ENCODE measurements at regions of chr21 and their contacts with region 1.

Region 1: GRCh38 chr21:45130324-45130774 is 56.0 kb downstream of the ADARB1 start:
- DNase-seq: no peak
- ATAC-seq: peak; percentile 85
- H3K4me3 ChIP-seq: no peak overlapping the region
- H3K27ac ChIP-seq: no peak overlapping the region
- H3K4me1 ChIP-seq: peaks cover 3% of the 10 kb centered on the region
- H3K27me3 ChIP-seq: peaks cover 0 to 2% of the 10 kb centered on the region in 2 experiments; a peak in 2 of 4 replicates
- CTCF ChIP-seq: no peak
- EP300 ChIP-seq: no peak
- POLR2A ChIP-seq: no peak
- RAD21 ChIP-seq: no peak

Region 2: DNA sequence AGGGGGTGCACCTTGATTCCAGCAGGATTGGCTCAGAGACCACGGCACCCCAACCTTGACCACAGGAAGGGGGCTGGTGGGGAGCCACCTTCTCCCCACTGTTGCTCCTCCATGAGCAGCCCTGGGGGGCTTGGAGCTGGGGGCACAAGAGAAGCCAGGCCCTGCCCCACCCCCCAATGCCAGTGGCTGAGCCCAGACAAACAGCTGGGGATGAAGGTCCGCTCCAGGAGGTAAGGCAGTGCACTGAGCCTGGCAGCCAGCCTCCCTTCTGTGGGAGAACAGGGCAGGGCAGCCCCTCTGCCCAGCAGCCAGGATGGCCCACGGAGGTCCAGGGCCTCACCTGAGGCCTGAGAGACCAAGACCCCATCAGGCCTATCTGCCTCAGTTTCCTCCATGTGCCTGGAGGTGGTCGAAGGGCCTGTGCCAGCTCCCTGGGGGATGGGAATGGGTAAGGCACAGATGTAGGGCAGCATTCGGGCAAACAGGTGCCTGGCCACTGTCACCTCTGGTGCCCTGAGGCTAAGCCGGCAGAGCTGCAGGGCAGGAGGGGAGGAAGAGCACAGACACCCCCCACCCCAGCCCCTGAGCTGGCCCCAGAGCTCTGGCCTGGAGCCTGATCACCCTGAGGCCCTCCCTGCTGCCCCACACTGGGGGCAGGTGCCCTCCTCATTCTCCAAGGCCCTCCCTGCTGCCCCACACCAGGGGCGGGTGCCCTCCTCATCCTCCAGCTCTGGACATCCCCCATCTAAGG is 216.7 kb before region 1 on chr21:
- CTCF ChIA-PET with region 1: no interaction called
- POLR2A ChIA-PET with region 1: no interaction called
- RAD21 ChIA-PET with region 1: no interaction called
- SMC1A ChIA-PET with region 1: no interaction called
- in situ Hi-C with region 1: no loop called
- intact Hi-C with region 1: no loop called
- DNase-seq: no peak
- ATAC-seq: no peak
- H3K4me3 ChIP-seq: no peak overlapping the region
- H3K27ac ChIP-seq: peak overlapping the region; percentile 45
- H3K4me1 ChIP-seq: peaks cover 38% of the 10 kb centered on the region
- H3K27me3 ChIP-seq: no peaks in the 10 kb centered on the region
- CTCF ChIP-seq: no peak
- EP300 ChIP-seq: no peak
- POLR2A ChIP-seq: no peak
- RAD21 ChIP-seq: no peak

Region 3: DNA sequence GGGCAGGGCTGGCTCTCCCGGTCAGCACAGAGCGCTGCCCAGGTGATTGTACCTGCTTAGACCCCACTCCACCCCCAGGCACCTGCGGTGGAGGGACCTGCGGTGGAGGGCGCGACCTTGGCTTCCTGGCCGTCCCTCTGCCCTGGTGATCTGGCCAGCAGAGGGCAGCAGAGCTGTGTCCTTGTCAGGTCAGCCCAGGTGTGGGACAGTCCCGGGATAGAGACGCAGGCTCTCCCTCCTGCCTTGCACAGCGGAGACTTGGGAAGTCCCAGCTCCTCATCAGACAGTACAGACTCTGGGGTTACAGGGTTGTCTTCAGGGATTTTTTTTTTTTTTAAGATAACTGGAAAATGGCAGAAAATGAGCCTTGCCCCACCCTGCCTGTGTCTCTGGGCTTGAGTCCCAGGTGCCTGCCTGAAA is 180.6 kb before region 1 on chr21:
- CTCF ChIA-PET with region 1: interaction called, 235 read pairs
- POLR2A ChIA-PET with region 1: interaction called, 4 read pairs
- RAD21 ChIA-PET with region 1: interaction called, 141 read pairs
- SMC1A ChIA-PET with region 1: interaction called, 153 read pairs
- in situ Hi-C with region 1: loop called (anchors 5 kb)
- intact Hi-C with region 1: loop called (anchors 1 kb)
- DNase-seq: no peak
- ATAC-seq: peak; percentile 96
- H3K4me3 ChIP-seq: no peak overlapping the region
- H3K27ac ChIP-seq: no peak overlapping the region
- H3K4me1 ChIP-seq: no peaks in the 10 kb centered on the region
- H3K27me3 ChIP-seq: no peaks in the 10 kb centered on the region
- CTCF ChIP-seq: peak; percentile 90 to 96 (median 95); a peak in 5 of 6 replicates
- EP300 ChIP-seq: no peak
- POLR2A ChIP-seq: no peak
- RAD21 ChIP-seq: peak; percentile 91

Region 4: GRCh38 chr21:44965251-44966022 is 164.9 kb before region 1 on chr21:
- CTCF ChIA-PET with region 1: interaction called, 17 read pairs
- POLR2A ChIA-PET with region 1: no interaction called
- RAD21 ChIA-PET with region 1: interaction called, 4 read pairs
- SMC1A ChIA-PET with region 1: interaction called, 10 read pairs
- in situ Hi-C with region 1: no loop called
- intact Hi-C with region 1: no loop called
- DNase-seq: no peak
- ATAC-seq: peak; percentile 56
- H3K4me3 ChIP-seq: no peak overlapping the region
- H3K27ac ChIP-seq: no peak overlapping the region
- H3K4me1 ChIP-seq: peaks cover 6% of the 10 kb centered on the region
- H3K27me3 ChIP-seq: no peaks in the 10 kb centered on the region
- CTCF ChIP-seq: no peak
- EP300 ChIP-seq: no peak
- POLR2A ChIP-seq: no peak
- RAD21 ChIP-seq: no peak

Region 5: GRCh38 chr21:45091550-45092322 is 38.6 kb before region 1 on chr21:
- CTCF ChIA-PET with region 1: interaction called, 626 read pairs
- POLR2A ChIA-PET with region 1: interaction called, 14 read pairs
- RAD21 ChIA-PET with region 1: interaction called, 134 read pairs
- SMC1A ChIA-PET with region 1: interaction called, 560 read pairs
- in situ Hi-C with region 1: no loop called
- intact Hi-C with region 1: no loop called
- DNase-seq: no peak
- ATAC-seq: no peak; the same call in 2 of the 3 replicates
- H3K4me3 ChIP-seq: no peak overlapping the region
- H3K27ac ChIP-seq: no peak overlapping the region
- H3K4me1 ChIP-seq: no peaks in the 10 kb centered on the region; the same call in 1 of the 2 replicates
- H3K27me3 ChIP-seq: peaks cover 0 to 7% of the 10 kb centered on the region in 2 experiments; a peak in 2 of 4 replicates
- CTCF ChIP-seq: no peak
- EP300 ChIP-seq: no peak
- POLR2A ChIP-seq: no peak
- RAD21 ChIP-seq: no peak

Region 6: GRCh38 chr21:45109831-45110492 is 20.4 kb before region 1 on chr21:
- CTCF ChIA-PET with region 1: interaction called, 626 read pairs
- POLR2A ChIA-PET with region 1: interaction called, 10 read pairs
- RAD21 ChIA-PET with region 1: interaction called, 204 read pairs
- SMC1A ChIA-PET with region 1: interaction called, 560 read pairs
- in situ Hi-C with region 1: no loop called
- intact Hi-C with region 1: loop called (anchors 2 kb)
- DNase-seq: peak; percentile 94
- ATAC-seq: peak; percentile 82
- H3K4me3 ChIP-seq: peak overlapping the region; percentile 54; the same call in 1 of the 2 replicates
- H3K27ac ChIP-seq: peak overlapping the region; percentile 74
- H3K4me1 ChIP-seq: peaks cover 42% of the 10 kb centered on the region
- H3K27me3 ChIP-seq: no peaks in the 10 kb centered on the region; a peak in 1 of 4 replicates
- CTCF ChIP-seq: no peak; a peak in 1 of 6 replicates
- EP300 ChIP-seq: peak; percentile 82 to 98; a peak in 3 of 4 replicates
- POLR2A ChIP-seq: no peak
- RAD21 ChIP-seq: peak; percentile 19; the same call in 1 of the 2 replicates

Region 7: GRCh38 chr21:45179568-45180245 is 49.4 kb after region 1 on chr21:
- CTCF ChIA-PET with region 1: no interaction called
- POLR2A ChIA-PET with region 1: no interaction called
- RAD21 ChIA-PET with region 1: no interaction called
- SMC1A ChIA-PET with region 1: no interaction called
- in situ Hi-C with region 1: no loop called
- intact Hi-C with region 1: no loop called
- DNase-seq: no peak
- ATAC-seq: no peak
- H3K4me3 ChIP-seq: no peak overlapping the region
- H3K27ac ChIP-seq: no peak overlapping the region
- H3K4me1 ChIP-seq: no peaks in the 10 kb centered on the region
- H3K27me3 ChIP-seq: no peaks in the 10 kb centered on the region
- CTCF ChIP-seq: no peak
- EP300 ChIP-seq: no peak
- POLR2A ChIP-seq: no peak
- RAD21 ChIP-seq: no peak